Psoas muscle (tissue), 8 donors: ENCODE measurements at regions of chr10 and their contacts with region 1.

Region 1: GRCh38 chr10:37976091-37976879 is at the start of gene ZNF25:
- DNase-seq: peak; percentile 98 to 99
- ATAC-seq: peak; percentile 97 to 99 (median 98)
- H3K4me3 ChIP-seq: peak within 1 kb of the TSS; percentile 77
- H3K27ac ChIP-seq: peak within 1 kb of the TSS; percentile 96
- H3K4me1 ChIP-seq: peaks cover 5% of the 10 kb centered on the region
- H3K27me3 ChIP-seq: no peaks in the 10 kb centered on the region
- CTCF ChIP-seq: peak; percentile 80
- total RNA-seq, gene ZNF25: 14.5 to 28.0 (median 22.3) TPM

Region 2: GRCh38 chr10:37857287-37858211 is 118.7 kb before region 1 on chr10 and contains the start of gene ZNF248:
- intact Hi-C with region 1: loop called in 1 of 2 experiments (anchors 2 kb)
- DNase-seq: peak; percentile 97 to 98
- ATAC-seq: peak; percentile 98 to 100 (median 99)
- H3K4me3 ChIP-seq: peak within 1 kb of the TSS; percentile 93
- H3K27ac ChIP-seq: peak within 1 kb of the TSS; percentile 100
- H3K4me1 ChIP-seq: peaks cover 32% of the 10 kb centered on the region
- H3K27me3 ChIP-seq: no peaks in the 10 kb centered on the region
- CTCF ChIP-seq: no peak
- total RNA-seq, gene ZNF248: 4.5 to 12.6 (median 8.1) TPM

Region 3: GRCh38 chr10:38010119-38010903 is 34.0 kb after region 1 on chr10 and contains the start of gene ZNF33A:
- intact Hi-C with region 1: loop called (anchors 1 to 2 kb)
- DNase-seq: peak; percentile 89 to 94
- ATAC-seq: peak; percentile 97 to 98 (median 97)
- H3K4me3 ChIP-seq: peak within 1 kb of the TSS; percentile 82
- H3K27ac ChIP-seq: peak within 1 kb of the TSS; percentile 97
- H3K4me1 ChIP-seq: peaks cover 8% of the 10 kb centered on the region
- H3K27me3 ChIP-seq: no peaks in the 10 kb centered on the region
- CTCF ChIP-seq: peak; percentile 27
- total RNA-seq, gene ZNF33A: 16.9 to 20.8 (median 18.8) TPM

Region 4: GRCh38 chr10:38094158-38094920 is 118.1 kb after region 1 on chr10 and contains the start of gene ZNF37A:
- intact Hi-C with region 1: loop called (anchors 2 to 10 kb)
- DNase-seq: peak; percentile 93 to 96
- ATAC-seq: peak; percentile 98 to 99 (median 99)
- H3K4me3 ChIP-seq: peak within 1 kb of the TSS; percentile 96
- H3K27ac ChIP-seq: peak within 1 kb of the TSS; percentile 90
- H3K4me1 ChIP-seq: peaks cover 4% of the 10 kb centered on the region
- H3K27me3 ChIP-seq: no peaks in the 10 kb centered on the region
- CTCF ChIP-seq: no peak
- total RNA-seq, gene ZNF37A: 6.9 to 9.8 (median 8.0) TPM